ENCODE measurements at regions of chr15 and their contacts with region 1.

Region 1: GRCh38 chr15:56918046-56918938 is at the start of gene TCF12:
- DNase-seq: peak; percentile 90 to 94 (median 91)
- H3K4me3 ChIP-seq: peak within 1 kb of the TSS; percentile 80 to 82
- H3K4me3 Mint-ChIP-seq: peak within 1 kb of the TSS; percentile 81 to 96 (median 88)
- H3K27ac ChIP-seq: peak within 1 kb of the TSS; percentile 79
- H3K27ac Mint-ChIP-seq: peak within 1 kb of the TSS; percentile 83 to 91 (median 86)
- H3K4me1 ChIP-seq: peaks cover 39% of the 10 kb centered on the region
- H3K4me1 Mint-ChIP-seq: peaks cover 32 to 55% (median 36%) of the 10 kb centered on the region in 4 donors
- H3K27me3 ChIP-seq: no peaks in the 10 kb centered on the region
- H3K27me3 Mint-ChIP-seq: no peaks in the 10 kb centered on the region
- total RNA-seq, gene TCF12: 78.5 to 86.5 TPM

Region 2: DNA sequence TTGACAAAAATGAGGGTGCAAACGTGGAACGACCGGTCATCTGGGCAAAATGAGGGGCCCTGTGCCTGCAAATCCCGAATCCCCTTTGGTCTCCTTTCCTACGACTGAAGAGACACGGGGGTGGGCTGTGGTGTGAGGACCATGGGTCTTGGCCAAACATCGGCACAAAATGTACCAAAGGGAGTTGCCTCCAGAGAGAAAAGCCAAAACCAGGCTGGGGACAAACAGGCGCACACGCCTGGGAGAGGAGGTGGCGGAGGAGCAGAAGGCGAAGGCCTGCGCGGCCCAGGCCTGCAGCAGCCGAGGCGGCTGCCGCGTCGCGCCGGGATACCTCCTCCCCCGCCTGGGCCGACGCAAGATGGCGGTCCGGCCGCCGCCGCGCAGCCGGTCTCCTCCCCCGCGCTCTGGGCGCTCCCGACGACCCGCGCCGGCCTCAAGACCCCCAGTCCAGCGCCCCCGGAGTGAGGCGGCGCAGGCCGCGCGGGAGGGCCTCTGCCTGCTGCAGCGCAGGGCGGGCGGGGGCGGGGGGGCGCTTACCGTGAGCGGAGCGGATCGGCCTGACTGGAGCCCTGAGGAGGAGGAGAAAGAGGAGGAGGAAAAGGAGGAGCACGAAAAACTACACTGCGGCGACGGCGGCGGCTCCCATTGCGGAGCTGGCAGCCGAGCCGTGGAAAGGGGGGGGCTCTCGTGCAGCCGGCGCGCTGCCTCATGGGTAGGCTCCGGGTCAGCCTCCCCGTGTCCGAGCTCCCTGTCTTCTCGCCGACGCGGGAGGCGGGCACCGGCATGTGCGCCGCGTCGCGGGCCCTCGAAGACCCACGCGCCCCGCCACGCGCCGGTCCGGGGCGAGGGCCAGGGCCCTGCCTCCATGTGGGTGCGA is 185.1 kb before region 1 on chr15 and contains the start of gene ZNF280D:
- CTCF ChIA-PET with region 1: no interaction called
- POLR2A ChIA-PET with region 1: interaction called, 12 read pairs
- intact Hi-C with region 1: loop called (anchors 1 kb)
- DNase-seq: peak; percentile 78 to 85 (median 82)
- H3K4me3 ChIP-seq: peak within 1 kb of the TSS; percentile 54 to 69
- H3K4me3 Mint-ChIP-seq: peak within 1 kb of the TSS; percentile 92 to 98 (median 96)
- H3K27ac ChIP-seq: peak within 1 kb of the TSS; percentile 73
- H3K27ac Mint-ChIP-seq: peak within 1 kb of the TSS; percentile 93 to 98 (median 96)
- H3K4me1 ChIP-seq: peaks cover 40% of the 10 kb centered on the region
- H3K4me1 Mint-ChIP-seq: peaks cover 28 to 44% (median 38%) of the 10 kb centered on the region in 4 donors
- H3K27me3 ChIP-seq: no peaks in the 10 kb centered on the region
- H3K27me3 Mint-ChIP-seq: no peaks in the 10 kb centered on the region
- total RNA-seq, gene ZNF280D: 44.5 to 50.1 TPM

Region 3: GRCh38 chr15:56786966-56787365 is 131.3 kb before region 1 on chr15:
- CTCF ChIA-PET with region 1: no interaction called
- POLR2A ChIA-PET with region 1: no interaction called
- intact Hi-C with region 1: no loop called
- DNase-seq: no peak
- H3K4me3 ChIP-seq: no peak overlapping the region
- H3K4me3 Mint-ChIP-seq: peak overlapping the region; percentile 27 to 72 (median 57)
- H3K27ac ChIP-seq: no peak overlapping the region
- H3K27ac Mint-ChIP-seq: peak overlapping the region in 2 of 7 donors; percentile 44 to 69
- H3K4me1 ChIP-seq: no peaks in the 10 kb centered on the region
- H3K4me1 Mint-ChIP-seq: peaks cover 7 to 9% (median 9%) of the 10 kb centered on the region in 4 donors
- H3K27me3 ChIP-seq: no peaks in the 10 kb centered on the region
- H3K27me3 Mint-ChIP-seq: no peaks in the 10 kb centered on the region

Region 4: GRCh38 chr15:56892659-56893356 is 25.5 kb before region 1 on chr15:
- CTCF ChIA-PET with region 1: interaction called, 16 read pairs
- POLR2A ChIA-PET with region 1: interaction called, 111 read pairs
- intact Hi-C with region 1: no loop called
- DNase-seq: no peak
- H3K4me3 ChIP-seq: no peak overlapping the region
- H3K4me3 Mint-ChIP-seq: no peak overlapping the region
- H3K27ac ChIP-seq: no peak overlapping the region
- H3K27ac Mint-ChIP-seq: no peak overlapping the region
- H3K4me1 ChIP-seq: peaks cover 7% of the 10 kb centered on the region
- H3K4me1 Mint-ChIP-seq: peaks cover 11 to 20% (median 15%) of the 10 kb centered on the region in 4 donors
- H3K27me3 ChIP-seq: no peaks in the 10 kb centered on the region
- H3K27me3 Mint-ChIP-seq: no peaks in the 10 kb centered on the region

Region 5: GRCh38 chr15:56931639-56932508 is 13.6 kb after region 1 on chr15:
- CTCF ChIA-PET with region 1: interaction called, 7 read pairs
- POLR2A ChIA-PET with region 1: interaction called, 17 read pairs
- intact Hi-C with region 1: no loop called
- DNase-seq: peak in 1 of 5 donors; percentile 10
- H3K4me3 ChIP-seq: no peak overlapping the region
- H3K4me3 Mint-ChIP-seq: peak overlapping the region in 3 of 8 donors; percentile 9 to 50 (median 10)
- H3K27ac ChIP-seq: no peak overlapping the region
- H3K27ac Mint-ChIP-seq: peak overlapping the region in 2 of 7 donors; percentile 34 to 43
- H3K4me1 ChIP-seq: peaks cover 34% of the 10 kb centered on the region
- H3K4me1 Mint-ChIP-seq: peaks cover 52 to 82% (median 70%) of the 10 kb centered on the region in 4 donors
- H3K27me3 ChIP-seq: no peaks in the 10 kb centered on the region
- H3K27me3 Mint-ChIP-seq: no peaks in the 10 kb centered on the region

Region 6: GRCh38 chr15:57138349-57138788 is 220.1 kb after region 1 on chr15:
- CTCF ChIA-PET with region 1: no interaction called
- POLR2A ChIA-PET with region 1: no interaction called
- intact Hi-C with region 1: loop called (anchors 5 kb)
- DNase-seq: peak in 1 of 5 donors; percentile 3
- H3K4me3 ChIP-seq: no peak overlapping the region
- H3K4me3 Mint-ChIP-seq: no peak overlapping the region
- H3K27ac ChIP-seq: no peak overlapping the region
- H3K27ac Mint-ChIP-seq: no peak overlapping the region
- H3K4me1 ChIP-seq: peaks cover 21% of the 10 kb centered on the region
- H3K4me1 Mint-ChIP-seq: peaks cover 14 to 30% (median 21%) of the 10 kb centered on the region in 4 donors
- H3K27me3 ChIP-seq: no peaks in the 10 kb centered on the region
- H3K27me3 Mint-ChIP-seq: no peaks in the 10 kb centered on the region

Region 7: GRCh38 chr15:57306161-57306943 is 388.1 kb after region 1 on chr15:
- CTCF ChIA-PET with region 1: interaction called, 11 read pairs
- POLR2A ChIA-PET with region 1: no interaction called
- intact Hi-C with region 1: loop called (anchors 1 kb)
- DNase-seq: peak; percentile 59 to 78 (median 68)
- H3K4me3 ChIP-seq: peak overlapping the region in 1 of 2 donors; percentile 18
- H3K4me3 Mint-ChIP-seq: peak overlapping the region in 7 of 8 donors; percentile 14 to 68 (median 62)
- H3K27ac ChIP-seq: no peak overlapping the region
- H3K27ac Mint-ChIP-seq: no peak overlapping the region
- H3K4me1 ChIP-seq: peaks cover 4% of the 10 kb centered on the region
- H3K4me1 Mint-ChIP-seq: peaks cover 0 to 7% (median 1%) of the 10 kb centered on the region in 4 donors
- H3K27me3 ChIP-seq: no peaks in the 10 kb centered on the region
- H3K27me3 Mint-ChIP-seq: no peaks in the 10 kb centered on the region

Measured in CD4-positive, alpha-beta memory T cell (primary cell).